Heart right ventricle (tissue), 16 donors: ENCODE measurements at regions of chr1 and their contacts with region 1.

Region 1: DNA sequence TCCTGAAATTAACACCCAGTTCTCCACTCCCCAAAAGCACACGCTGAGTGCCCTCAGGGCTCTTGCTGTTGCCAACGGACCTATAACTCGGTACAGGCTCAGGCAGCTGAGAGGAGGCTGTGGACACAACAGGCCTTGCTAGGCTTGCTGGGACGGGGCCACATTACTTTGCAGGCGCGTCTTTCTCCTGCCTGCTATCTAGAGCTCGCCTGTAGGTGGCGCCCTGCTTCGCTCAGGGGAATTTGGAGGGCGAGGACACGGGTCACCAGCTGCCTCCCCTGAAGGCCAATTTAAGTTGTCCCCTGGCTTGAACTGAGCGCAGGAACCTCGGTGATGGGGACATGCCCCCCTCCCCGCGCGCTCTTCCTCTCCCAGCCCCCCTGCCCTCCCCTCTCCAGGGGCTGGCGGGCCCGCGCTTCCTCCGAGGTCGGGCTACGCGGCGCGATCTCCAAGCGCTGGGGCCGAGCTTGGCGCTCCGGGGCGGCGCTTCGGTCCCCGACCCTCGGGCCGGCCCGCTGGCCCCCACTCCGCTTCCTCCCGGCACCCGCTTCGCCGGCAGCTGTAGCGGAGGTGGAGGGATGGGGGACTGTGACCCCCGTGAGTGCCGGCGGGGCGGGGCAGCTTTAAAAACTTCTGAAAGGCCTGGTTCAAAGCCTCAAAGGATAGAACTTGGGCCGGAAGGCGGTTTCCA is 32.4 kb upstream of the NFIA start:
- DNase-seq: peak; percentile 94 to 95
- ATAC-seq: peak; percentile 82 to 92 (median 86)
- H3K4me3 ChIP-seq: peak overlapping the region; percentile 64 to 91 (median 78)
- H3K27ac ChIP-seq: peak overlapping the region; percentile 92 to 100 (median 98)
- H3K4me1 ChIP-seq: peaks cover 5 to 50% (median 38%) of the 10 kb centered on the region in 9 donors
- H3K27me3 ChIP-seq: peaks cover 0 to 40% (median 0%) of the 10 kb centered on the region in 7 donors
- CTCF ChIP-seq: peak; percentile 94 to 99 (median 98)

Region 2: DNA sequence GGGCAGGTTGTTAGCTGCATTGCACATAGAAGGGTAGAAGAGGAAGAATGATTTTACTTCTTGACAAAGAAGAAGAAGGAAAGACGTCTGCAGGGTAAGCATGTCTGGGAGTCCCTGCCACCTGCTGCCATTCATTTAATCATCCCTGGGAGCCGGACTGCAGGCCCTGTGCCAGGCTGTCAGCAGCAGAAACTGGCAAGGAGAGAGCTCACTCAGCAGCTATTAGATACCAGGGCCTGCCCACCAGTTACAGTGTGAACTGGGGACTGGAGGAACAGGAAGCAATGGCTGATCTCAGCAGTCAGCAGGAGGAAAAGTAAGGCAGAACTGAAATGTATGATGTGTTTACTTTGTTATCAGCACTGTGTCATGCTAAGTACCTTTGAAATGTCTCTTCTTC is 900.7 kb before region 1 on chr1:
- intact Hi-C with region 1: loop called in 1 of 10 experiments (anchors 10 kb)
- DNase-seq: peak; percentile 53 to 71
- ATAC-seq: peak; percentile 74 to 99 (median 92)
- H3K4me3 ChIP-seq: no peak overlapping the region
- H3K27ac ChIP-seq: no peak overlapping the region
- H3K4me1 ChIP-seq: peaks cover 0 to 8% (median 0%) of the 10 kb centered on the region in 9 donors
- H3K27me3 ChIP-seq: peaks cover 0 to 3% (median 0%) of the 10 kb centered on the region in 7 donors
- CTCF ChIP-seq: no peak

Region 3: GRCh38 chr1:60978421-60979357 is 71.3 kb before region 1 on chr1:
- intact Hi-C with region 1: loop called in 1 of 10 experiments (anchors 10 kb)
- DNase-seq: peak in 1 of 2 donors; percentile 23
- ATAC-seq: peak in 4 of 8 donors; percentile 39 to 61 (median 43)
- H3K4me3 ChIP-seq: no peak overlapping the region
- H3K27ac ChIP-seq: no peak overlapping the region
- H3K4me1 ChIP-seq: peaks cover 0 to 14% (median 6%) of the 10 kb centered on the region in 9 donors
- H3K27me3 ChIP-seq: no peaks in the 10 kb centered on the region
- CTCF ChIP-seq: peak in 8 of 9 donors; percentile 16 to 67 (median 53)

Region 4: GRCh38 chr1:61170328-61171238 is 120.6 kb after region 1 on chr1:
- intact Hi-C with region 1: loop called in 1 of 10 experiments (anchors 10 kb)
- DNase-seq: no peak
- ATAC-seq: peak in 6 of 8 donors; percentile 43 to 77 (median 56)
- H3K4me3 ChIP-seq: no peak overlapping the region
- H3K27ac ChIP-seq: peak overlapping the region in 8 of 10 donors; percentile 3 to 67 (median 32)
- H3K4me1 ChIP-seq: peaks cover 18 to 88% (median 69%) of the 10 kb centered on the region in 9 donors
- H3K27me3 ChIP-seq: no peaks in the 10 kb centered on the region
- CTCF ChIP-seq: no peak

Region 5: GRCh38 chr1:61253059-61253735 is 203.2 kb after region 1 on chr1:
- intact Hi-C with region 1: loop called in 2 of 10 experiments (anchors 10 kb)
- DNase-seq: peak; percentile 44 to 81
- ATAC-seq: peak; percentile 67 to 82 (median 77)
- H3K4me3 ChIP-seq: no peak overlapping the region
- H3K27ac ChIP-seq: peak overlapping the region in 9 of 10 donors; percentile 23 to 78 (median 70)
- H3K4me1 ChIP-seq: peaks cover 19 to 90% (median 57%) of the 10 kb centered on the region in 9 donors
- H3K27me3 ChIP-seq: no peaks in the 10 kb centered on the region
- CTCF ChIP-seq: no peak

Region 6: GRCh38 chr1:61343734-61344420 is 293.9 kb after region 1 on chr1:
- intact Hi-C with region 1: loop called in 8 of 10 experiments (anchors 2 to 10 kb)
- DNase-seq: no peak
- ATAC-seq: peak in 3 of 8 donors; percentile 18 to 31 (median 22)
- H3K4me3 ChIP-seq: no peak overlapping the region
- H3K27ac ChIP-seq: peak overlapping the region in 5 of 10 donors; percentile 3 to 55 (median 24)
- H3K4me1 ChIP-seq: peaks cover 5 to 44% (median 32%) of the 10 kb centered on the region in 9 donors
- H3K27me3 ChIP-seq: no peaks in the 10 kb centered on the region
- CTCF ChIP-seq: no peak

Region 7: GRCh38 chr1:61641578-61642336 is 591.8 kb after region 1 on chr1:
- intact Hi-C with region 1: loop called in 6 of 10 experiments (anchors 5 to 10 kb)
- DNase-seq: peak; percentile 78 to 79
- ATAC-seq: peak; percentile 82 to 91 (median 88)
- H3K4me3 ChIP-seq: peak overlapping the region in 6 of 10 donors; percentile 28 to 49 (median 31)
- H3K27ac ChIP-seq: peak overlapping the region in 9 of 10 donors; percentile 39 to 90 (median 77)
- H3K4me1 ChIP-seq: peaks cover 0 to 32% (median 25%) of the 10 kb centered on the region in 9 donors
- H3K27me3 ChIP-seq: no peaks in the 10 kb centered on the region
- CTCF ChIP-seq: peak; percentile 52 to 92 (median 84)